ENCODE measurements at regions of chr18 and their contacts with region 1.

Region 1: GRCh38 chr18:77101410-77102258 is 30.9 kb downstream of the MBP start:
- DNase-seq: peak; percentile 95
- H3K4me3 Mint-ChIP-seq: peak overlapping the region; percentile 60
- H3K27ac Mint-ChIP-seq: peak overlapping the region; percentile 89
- H3K4me1 Mint-ChIP-seq: peaks cover 20% of the 10 kb centered on the region
- H3K27me3 Mint-ChIP-seq: no peaks in the 10 kb centered on the region
- CTCF ChIP-seq: no peak

Region 2: GRCh38 chr18:77067291-77068061 is 34.2 kb before region 1 on chr18:
- CTCF ChIA-PET with region 1: interaction called, 4 read pairs
- POLR2A ChIA-PET with region 1: interaction called, 11 read pairs
- intact Hi-C with region 1: loop called (anchors 1 kb)
- DNase-seq: peak; percentile 88
- H3K4me3 Mint-ChIP-seq: peak overlapping the region; percentile 40
- H3K27ac Mint-ChIP-seq: peak overlapping the region; percentile 88
- H3K4me1 Mint-ChIP-seq: peaks cover 50% of the 10 kb centered on the region
- H3K27me3 Mint-ChIP-seq: no peaks in the 10 kb centered on the region
- CTCF ChIP-seq: peak; percentile 17

Region 3: GRCh38 chr18:77114415-77115191 is 13.0 kb after region 1 on chr18:
- CTCF ChIA-PET with region 1: interaction called, 3 read pairs
- POLR2A ChIA-PET with region 1: interaction called, 50 read pairs
- intact Hi-C with region 1: loop called (anchors 2 kb)
- DNase-seq: peak; percentile 98
- H3K4me3 Mint-ChIP-seq: peak overlapping the region; percentile 57
- H3K27ac Mint-ChIP-seq: peak overlapping the region; percentile 85
- H3K4me1 Mint-ChIP-seq: peaks cover 44% of the 10 kb centered on the region
- H3K27me3 Mint-ChIP-seq: no peaks in the 10 kb centered on the region
- CTCF ChIP-seq: no peak

Region 4: DNA sequence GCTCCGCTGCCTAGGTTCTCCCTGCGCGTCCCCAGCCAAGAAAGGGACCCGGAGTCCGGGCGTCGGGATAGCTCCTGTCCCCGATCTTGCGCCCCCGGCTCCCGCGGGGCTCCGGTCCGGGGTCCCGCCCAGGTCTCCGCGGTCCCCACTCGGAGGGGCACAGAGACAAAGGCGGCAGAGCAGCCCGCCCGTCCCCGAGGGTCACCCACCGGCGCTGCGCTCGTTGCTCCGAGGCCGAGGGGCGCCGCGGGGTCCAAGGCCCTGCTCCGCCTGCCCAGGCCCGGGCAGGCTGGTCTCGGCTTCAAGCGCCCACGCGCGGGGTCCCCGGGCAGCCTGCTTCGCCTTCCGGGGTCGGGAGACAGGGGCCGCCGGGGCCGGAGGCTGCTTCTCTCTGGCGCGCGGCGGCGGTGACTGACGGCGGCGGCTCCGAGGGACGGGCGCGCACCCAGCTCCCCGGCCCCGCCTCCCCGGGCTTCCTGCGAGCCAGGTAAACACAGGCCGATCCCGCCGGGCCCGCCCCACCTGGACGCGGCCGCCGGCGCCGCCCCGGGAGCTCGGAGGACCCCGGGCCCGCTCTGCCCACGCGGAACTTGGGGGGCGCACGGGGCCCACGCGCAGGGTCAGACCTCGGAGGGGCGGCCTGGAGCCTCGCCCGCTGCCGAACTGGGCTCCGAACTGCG is 30.9 kb after region 1 on chr18 and contains the start of gene MBP:
- CTCF ChIA-PET with region 1: no interaction called
- POLR2A ChIA-PET with region 1: interaction called, 38 read pairs
- intact Hi-C with region 1: loop called (anchors 1 kb)
- DNase-seq: peak; percentile 73
- H3K4me3 Mint-ChIP-seq: peak within 1 kb of the TSS; percentile 82
- H3K27ac Mint-ChIP-seq: no peak within 1 kb of the TSS
- H3K4me1 Mint-ChIP-seq: peaks cover 16% of the 10 kb centered on the region
- H3K27me3 Mint-ChIP-seq: no peaks in the 10 kb centered on the region
- CTCF ChIP-seq: no peak
- total RNA-seq, gene MBP: 31.6 and 31.7 TPM in 2 replicates